ENCODE measurements at regions of chr19 and their contacts with region 1.

Region 1: GRCh38 chr19:5953680-5954213 is 24.2 kb downstream of the RANBP3 start:
- DNase-seq: peak in 2 of 3 donors; percentile 49 to 61
- ATAC-seq: no peak
- H3K4me3 ChIP-seq: no peak overlapping the region
- H3K27ac ChIP-seq: peak overlapping the region; percentile 80
- H3K4me1 ChIP-seq: peaks cover 37% of the 10 kb centered on the region
- H3K27me3 ChIP-seq: no peaks in the 10 kb centered on the region

Region 2: DNA sequence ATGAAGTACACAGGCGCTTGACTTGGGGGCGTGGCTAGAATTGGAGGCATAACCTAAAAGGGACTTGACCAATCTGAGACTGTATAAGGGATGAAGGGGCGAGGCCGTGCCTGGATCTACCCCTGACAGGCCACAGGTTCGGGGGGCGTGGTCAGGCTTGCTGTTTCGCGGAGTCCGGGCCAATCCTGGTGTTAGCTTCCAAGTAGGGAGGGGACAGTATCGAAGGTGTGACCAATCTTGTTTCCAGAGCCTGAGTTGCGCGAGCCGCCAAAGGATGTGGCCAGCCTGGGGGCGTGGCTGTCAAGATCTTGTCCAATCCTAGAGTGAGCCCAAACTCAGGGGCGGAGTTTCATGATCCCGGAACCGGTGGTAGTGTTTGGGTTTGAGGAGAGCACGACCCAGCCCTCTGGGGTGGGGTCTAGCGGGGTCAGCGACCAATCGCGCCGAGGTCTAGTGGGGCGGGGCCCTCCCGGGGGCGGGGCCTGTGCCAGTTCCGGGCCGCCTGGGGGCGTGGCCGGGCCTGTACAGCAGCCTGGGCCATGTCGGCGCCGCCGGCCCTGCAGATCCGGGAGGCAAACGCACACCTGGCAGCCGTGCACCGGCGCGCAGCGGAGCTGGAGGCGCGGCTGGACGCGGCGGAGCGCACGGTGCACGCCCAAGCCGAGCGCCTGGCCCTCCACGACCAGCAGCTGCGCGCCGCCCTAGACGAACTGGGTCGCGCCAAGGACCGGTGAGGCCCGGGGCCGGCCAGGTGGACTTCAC is 49.2 kb before region 1 on chr19 and contains the start of gene VMAC:
- intact Hi-C with region 1: loop called in 1 of 4 experiments (anchors 10 kb)
- DNase-seq: peak; percentile 100
- ATAC-seq: peak; percentile 92
- H3K4me3 ChIP-seq: peak within 1 kb of the TSS; percentile 89
- H3K27ac ChIP-seq: peak within 1 kb of the TSS; percentile 78
- H3K4me1 ChIP-seq: no peaks in the 10 kb centered on the region
- H3K27me3 ChIP-seq: no peaks in the 10 kb centered on the region
- total RNA-seq, gene VMAC: 1.9 to 5.8 (median 3.8) TPM

Region 3: DNA sequence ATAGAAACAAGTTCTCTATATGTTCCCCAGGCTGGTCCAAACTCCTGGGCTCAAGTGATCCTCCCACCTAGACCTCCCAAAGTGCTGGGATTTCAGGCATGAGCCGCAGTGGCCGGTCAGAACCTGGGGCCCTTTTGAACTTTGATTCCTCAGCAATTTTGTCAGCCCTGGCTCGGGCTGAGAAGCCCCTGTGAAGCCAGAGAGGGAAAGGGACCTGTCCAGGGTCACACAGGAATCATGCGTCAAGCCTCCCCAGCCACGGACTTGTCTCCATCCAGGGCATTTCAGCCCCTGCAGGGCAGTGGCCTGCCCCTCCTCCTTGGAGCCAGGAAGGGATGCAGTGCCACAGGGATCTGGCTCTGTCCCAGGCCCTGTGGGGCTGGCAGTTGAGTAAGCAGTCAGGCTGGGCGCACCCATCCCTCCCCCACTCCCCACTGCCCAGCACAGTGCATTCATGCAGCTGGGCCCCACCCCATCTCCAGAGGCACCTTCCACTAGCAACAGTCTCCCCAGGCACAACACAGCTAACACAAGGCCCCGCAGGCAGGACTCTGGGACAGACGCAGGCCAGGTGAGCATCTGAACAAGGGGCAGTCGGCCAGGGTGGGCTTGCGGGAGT is 39.9 kb before region 1 on chr19 and contains the start of gene CAPS:
- intact Hi-C with region 1: loop called in 2 of 4 experiments (anchors 5 to 10 kb)
- DNase-seq: peak; percentile 71 to 84 (median 79)
- ATAC-seq: peak; percentile 61 to 68
- H3K4me3 ChIP-seq: no peak within 1 kb of the TSS
- H3K27ac ChIP-seq: peak within 1 kb of the TSS; percentile 11
- H3K4me1 ChIP-seq: peaks cover 5% of the 10 kb centered on the region
- H3K27me3 ChIP-seq: no peaks in the 10 kb centered on the region
- total RNA-seq, gene CAPS: 8.9 to 14.2 (median 9.9) TPM

Measured in right cardiac atrium (tissue), 5 donors.